ENCODE measurements at regions of chr2 and their contacts with region 1.

Region 1: DNA sequence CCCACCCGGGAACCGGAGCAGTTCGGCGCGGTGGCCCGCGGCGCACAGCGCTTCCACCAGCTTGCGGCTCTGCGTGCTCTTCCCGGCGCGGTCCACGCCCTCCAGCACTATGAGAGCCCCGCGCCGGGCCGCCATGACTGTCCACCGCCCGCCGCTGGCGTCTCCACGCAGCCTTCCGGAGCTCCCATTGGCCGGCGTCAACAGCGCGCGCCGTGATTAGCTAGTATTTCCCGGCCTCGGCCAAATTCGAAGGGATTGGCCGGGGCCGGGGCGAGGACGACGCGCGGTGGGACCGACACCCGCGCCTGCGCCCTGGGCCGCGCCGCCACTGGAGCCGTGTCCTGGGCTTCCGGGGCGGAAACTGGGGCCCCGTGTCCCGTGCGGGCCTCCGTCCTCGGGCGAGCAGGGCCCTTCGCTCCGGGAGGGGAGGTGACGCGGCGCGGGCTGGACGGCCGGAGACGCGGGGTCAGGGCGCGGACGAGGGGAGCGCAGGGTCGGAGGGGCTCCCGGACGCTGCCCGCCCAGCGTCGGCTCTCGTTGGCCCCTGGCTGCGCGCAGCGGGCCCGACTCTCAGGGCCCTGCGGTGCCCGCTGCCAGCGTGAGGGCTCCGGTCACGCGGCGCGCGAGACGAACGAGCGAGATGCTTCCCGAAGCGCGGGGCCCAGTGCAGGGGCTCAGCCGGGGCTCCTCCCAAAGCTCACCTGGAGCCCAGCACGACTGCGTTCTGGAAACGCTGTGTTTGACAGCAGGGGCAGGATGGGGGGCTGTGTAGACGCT is at the start of gene DTYMK:
- DNase-seq: peak; percentile 90
- ATAC-seq: peak; percentile 98
- H3K4me3 Mint-ChIP-seq: peak within 1 kb of the TSS; percentile 96
- H3K27ac Mint-ChIP-seq: peak within 1 kb of the TSS; percentile 86; the same call in 1 of the 2 replicates
- H3K4me1 Mint-ChIP-seq: peaks cover 13% of the 10 kb centered on the region
- H3K27me3 Mint-ChIP-seq: no peaks in the 10 kb centered on the region
- CTCF ChIP-seq: no peak
- total RNA-seq, gene DTYMK: 79.9 to 88.1 TPM (median 87.7 TPM) in 3 replicates

Region 2: DNA sequence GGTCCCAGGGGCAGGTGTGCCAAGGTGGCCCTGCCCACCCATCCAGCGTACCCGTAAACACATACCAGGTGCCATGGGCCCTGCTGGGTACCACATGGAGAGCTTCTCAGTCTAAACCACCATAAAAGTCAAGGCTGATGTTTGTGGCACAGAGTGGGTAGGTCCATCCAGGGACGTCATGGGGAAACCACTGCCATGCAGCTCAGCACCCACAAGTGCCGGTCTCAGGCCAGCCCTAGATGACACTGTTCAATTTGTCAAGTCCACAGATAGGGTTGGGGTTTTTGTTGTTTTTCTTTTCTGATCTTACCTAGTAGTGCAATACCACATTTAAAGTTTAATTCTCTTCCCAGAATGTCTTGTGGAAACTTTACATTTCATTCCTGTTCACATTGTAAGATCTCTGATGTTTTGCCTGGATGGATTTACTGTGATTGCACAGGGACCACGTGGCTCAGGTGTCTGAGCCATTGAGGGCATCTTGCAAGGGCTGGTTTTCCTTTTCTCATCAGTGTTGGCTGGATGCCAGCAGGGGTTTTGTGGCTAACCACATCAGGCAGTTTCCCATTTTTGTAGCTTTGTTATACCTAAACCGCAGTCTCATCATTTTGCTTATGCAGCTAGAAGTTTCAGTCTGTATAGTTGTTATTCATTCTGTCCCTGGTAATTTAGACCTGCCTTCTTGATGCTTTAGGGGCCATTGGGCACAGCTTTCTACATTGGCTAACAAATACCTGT is 243.2 kb before region 1 on chr2:
- CTCF ChIA-PET with region 1: no interaction called
- POLR2A ChIA-PET with region 1: no interaction called
- DNase-seq: no peak
- ATAC-seq: no peak
- H3K4me3 Mint-ChIP-seq: no peak overlapping the region
- H3K27ac Mint-ChIP-seq: no peak overlapping the region
- H3K4me1 Mint-ChIP-seq: no peaks in the 10 kb centered on the region
- H3K27me3 Mint-ChIP-seq: no peaks in the 10 kb centered on the region
- CTCF ChIP-seq: no peak

Region 3: GRCh38 chr2:241617431-241618154 is 69.2 kb before region 1 on chr2:
- CTCF ChIA-PET with region 1: no interaction called
- POLR2A ChIA-PET with region 1: no interaction called
- DNase-seq: no peak
- ATAC-seq: peak; percentile 73
- H3K4me3 Mint-ChIP-seq: peak overlapping the region; percentile 67
- H3K27ac Mint-ChIP-seq: peak overlapping the region; percentile 91
- H3K4me1 Mint-ChIP-seq: peaks cover 27% of the 10 kb centered on the region
- H3K27me3 Mint-ChIP-seq: no peaks in the 10 kb centered on the region
- CTCF ChIP-seq: no peak

Region 4: DNA sequence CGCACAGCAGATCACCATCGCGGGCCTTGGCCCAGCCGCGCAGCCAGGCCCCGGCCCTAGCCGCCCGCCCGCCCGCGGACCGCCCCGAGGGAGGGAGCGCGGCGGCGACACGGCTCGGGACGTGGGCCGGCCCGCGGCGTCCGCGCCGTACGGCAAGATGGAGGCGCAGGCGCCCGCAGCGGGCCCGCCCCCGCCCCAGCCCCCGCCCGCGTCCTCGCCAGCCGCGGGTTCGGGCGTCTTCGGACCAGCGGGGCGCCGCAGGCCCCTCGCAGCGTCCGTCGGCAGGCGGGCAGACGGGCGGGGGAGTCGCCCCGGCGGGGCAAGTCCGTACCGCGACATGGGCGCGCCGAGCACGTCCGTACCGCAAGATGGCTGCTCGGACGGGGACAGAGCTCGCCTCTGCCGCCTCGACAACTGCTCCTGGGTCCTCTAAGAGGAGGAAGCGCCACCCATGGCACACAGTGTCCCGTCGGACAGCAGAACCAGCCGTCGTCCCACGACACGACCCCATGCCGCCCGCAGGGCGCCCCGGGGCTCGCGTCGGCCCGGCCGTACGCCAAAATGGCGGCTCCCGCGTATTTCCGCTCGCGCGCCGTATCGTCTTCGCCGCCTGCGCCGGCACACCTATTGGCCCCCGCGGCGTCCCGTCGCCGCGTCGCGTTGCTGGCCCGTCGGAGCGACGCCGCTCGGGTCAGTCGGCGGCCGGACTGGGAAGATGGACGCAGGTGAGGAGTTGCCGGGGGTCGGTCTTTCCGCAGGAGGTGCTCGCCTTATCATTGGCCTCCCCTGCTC is 49.6 kb before region 1 on chr2 and contains the starts of genes ATG4B and THAP4:
- CTCF ChIA-PET with region 1: no interaction called
- POLR2A ChIA-PET with region 1: no interaction called
- DNase-seq: peak; percentile 80
- ATAC-seq: peak; percentile 68
- H3K4me3 Mint-ChIP-seq: peak within 1 kb of the TSS; percentile 86
- H3K27ac Mint-ChIP-seq: peak within 1 kb of the TSS; percentile 86
- H3K4me1 Mint-ChIP-seq: peaks cover 32% of the 10 kb centered on the region
- H3K27me3 Mint-ChIP-seq: no peaks in the 10 kb centered on the region
- CTCF ChIP-seq: no peak
- total RNA-seq, gene ATG4B: 113 to 133 TPM (median 127 TPM) in 3 replicates
- total RNA-seq, gene THAP4: 72.6 to 88.6 TPM (median 78.0 TPM) in 3 replicates

Region 5: GRCh38 chr2:241670333-241671110 is 16.3 kb before region 1 on chr2:
- CTCF ChIA-PET with region 1: no interaction called
- POLR2A ChIA-PET with region 1: no interaction called
- DNase-seq: no peak
- ATAC-seq: no peak
- H3K4me3 Mint-ChIP-seq: no peak overlapping the region
- H3K27ac Mint-ChIP-seq: no peak overlapping the region
- H3K4me1 Mint-ChIP-seq: peaks cover 2% of the 10 kb centered on the region; the same call in 1 of the 2 replicates
- H3K27me3 Mint-ChIP-seq: no peaks in the 10 kb centered on the region
- CTCF ChIP-seq: no peak

Region 6: GRCh38 chr2:241702132-241703031 is 15.5 kb after region 1 on chr2:
- CTCF ChIA-PET with region 1: interaction called, 30 read pairs
- POLR2A ChIA-PET with region 1: interaction called, 28 read pairs
- DNase-seq: peak; percentile 92
- ATAC-seq: peak; percentile 73
- H3K4me3 Mint-ChIP-seq: peak overlapping the region; percentile 83
- H3K27ac Mint-ChIP-seq: peak overlapping the region; percentile 22; the same call in 1 of the 2 replicates
- H3K4me1 Mint-ChIP-seq: peaks cover 12% of the 10 kb centered on the region
- H3K27me3 Mint-ChIP-seq: no peaks in the 10 kb centered on the region
- CTCF ChIP-seq: no peak